HCT116 (cell line): ENCODE measurements at regions of chr21 and their contacts with region 1.

Region 1: GRCh38 chr21:44510508-44511210 is 29.3 kb downstream of the KRTAP10-1 start:
- DNase-seq: peak; percentile 29
- ATAC-seq: peak; percentile 93
- H3K4me3 ChIP-seq: peak overlapping the region; percentile 23 to 29
- H3K27ac ChIP-seq: no peak overlapping the region
- H3K4me1 ChIP-seq: peaks cover 9 to 15% of the 10 kb centered on the region in 2 experiments
- H3K27me3 ChIP-seq: no peaks in the 10 kb centered on the region
- CTCF ChIP-seq: peak in 2 of 3 experiments; percentile 89 to 95; a peak in 4 of 6 replicates
- POLR2A ChIP-seq: no peak
- RAD21 ChIP-seq: no peak

Region 2: DNA sequence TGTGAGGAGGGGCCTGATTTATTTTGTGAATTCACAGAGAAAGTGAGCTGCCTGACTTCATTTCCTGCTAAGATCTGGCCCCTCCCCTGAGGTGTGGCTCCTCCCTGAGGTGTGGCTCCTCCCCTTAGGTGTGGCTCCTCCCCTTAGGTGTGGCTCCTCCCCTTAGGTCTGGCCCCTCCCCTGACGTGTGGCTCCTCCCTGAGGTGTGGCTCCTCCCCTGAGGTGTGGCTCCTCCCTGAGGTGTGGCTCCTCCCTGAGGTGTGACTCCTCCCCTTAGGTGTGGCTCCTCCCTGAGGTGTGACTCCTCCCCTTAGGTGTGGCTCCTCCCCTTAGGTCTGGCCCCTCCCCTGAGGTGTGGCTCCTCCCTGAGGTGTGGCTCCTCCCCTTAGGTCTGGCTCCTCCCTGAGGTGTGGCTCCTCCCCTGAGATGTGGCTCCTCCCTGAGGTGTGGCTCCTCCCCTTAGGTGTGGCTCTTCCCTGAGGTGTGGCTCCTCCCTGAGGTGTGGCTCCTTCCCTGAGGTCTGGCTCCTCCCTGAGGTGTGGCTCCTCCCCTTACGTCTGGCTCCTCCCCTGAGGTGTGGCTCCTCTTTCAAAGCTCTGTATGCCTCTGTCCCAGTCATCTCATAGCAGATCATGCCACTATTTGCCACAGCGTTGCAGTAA is 82.2 kb before region 1 on chr21:
- CTCF ChIA-PET with region 1: no interaction called
- POLR2A ChIA-PET with region 1: no interaction called
- RAD21 ChIA-PET with region 1: no interaction called
- intact Hi-C with region 1: no loop called
- DNase-seq: peak; percentile 89
- ATAC-seq: peak; percentile 50
- H3K4me3 ChIP-seq: no peak overlapping the region
- H3K27ac ChIP-seq: peak overlapping the region; percentile 88
- H3K4me1 ChIP-seq: peaks cover 4 to 36% of the 10 kb centered on the region in 2 experiments; a peak in 3 of 4 replicates
- H3K27me3 ChIP-seq: no peaks in the 10 kb centered on the region
- CTCF ChIP-seq: no peak
- POLR2A ChIP-seq: no peak
- RAD21 ChIP-seq: no peak

Region 3: GRCh38 chr21:44742418-44743153 is 231.9 kb after region 1 on chr21:
- CTCF ChIA-PET with region 1: interaction called, 38 read pairs
- POLR2A ChIA-PET with region 1: no interaction called
- RAD21 ChIA-PET with region 1: interaction called in 1 of 2 experiments, 6 read pairs
- intact Hi-C with region 1: loop called (anchors 2 kb)
- DNase-seq: no peak
- ATAC-seq: peak; percentile 59
- H3K4me3 ChIP-seq: no peak overlapping the region
- H3K27ac ChIP-seq: no peak overlapping the region
- H3K4me1 ChIP-seq: no peaks in the 10 kb centered on the region
- H3K27me3 ChIP-seq: no peaks in the 10 kb centered on the region
- CTCF ChIP-seq: peak; percentile 30 to 46 (median 37); a peak in 4 of 6 replicates
- POLR2A ChIP-seq: no peak
- RAD21 ChIP-seq: peak; percentile 62

Region 4: GRCh38 chr21:44792702-44793591 is 282.3 kb after region 1 on chr21:
- CTCF ChIA-PET with region 1: interaction called, 28 read pairs
- POLR2A ChIA-PET with region 1: interaction called, 7 read pairs
- RAD21 ChIA-PET with region 1: interaction called in 1 of 2 experiments, 5 read pairs
- intact Hi-C with region 1: loop called (anchors 1 kb)
- DNase-seq: peak; percentile 24
- ATAC-seq: peak; percentile 98
- H3K4me3 ChIP-seq: no peak overlapping the region
- H3K27ac ChIP-seq: no peak overlapping the region
- H3K4me1 ChIP-seq: no peaks in the 10 kb centered on the region
- H3K27me3 ChIP-seq: no peaks in the 10 kb centered on the region
- CTCF ChIP-seq: peak; percentile 65 to 79 (median 74); a peak in 5 of 6 replicates
- POLR2A ChIP-seq: no peak
- RAD21 ChIP-seq: peak; percentile 82